OCI-LY7 (cell line): ENCODE measurements at regions of chr2 and their contacts with region 1.

Region 1: GRCh38 chr2:200703127-200703925 is 108.4 kb upstream of the BZW1 start:
- DNase-seq: peak; percentile 84
- H3K4me3 ChIP-seq: no peak overlapping the region
- H3K27ac ChIP-seq: no peak overlapping the region
- H3K4me1 ChIP-seq: peaks cover 30% of the 10 kb centered on the region
- CTCF ChIP-seq: peak; percentile 92

Region 2: GRCh38 chr2:199979832-199980628 is 723.3 kb before region 1 on chr2:
- CTCF ChIA-PET with region 1: no interaction called
- POLR2A ChIA-PET with region 1: no interaction called
- intact Hi-C with region 1: loop called (anchors 1 kb)
- DNase-seq: peak; percentile 73
- H3K4me3 ChIP-seq: no peak overlapping the region
- H3K27ac ChIP-seq: no peak overlapping the region
- H3K4me1 ChIP-seq: no peaks in the 10 kb centered on the region
- CTCF ChIP-seq: peak; percentile 95

Region 3: DNA sequence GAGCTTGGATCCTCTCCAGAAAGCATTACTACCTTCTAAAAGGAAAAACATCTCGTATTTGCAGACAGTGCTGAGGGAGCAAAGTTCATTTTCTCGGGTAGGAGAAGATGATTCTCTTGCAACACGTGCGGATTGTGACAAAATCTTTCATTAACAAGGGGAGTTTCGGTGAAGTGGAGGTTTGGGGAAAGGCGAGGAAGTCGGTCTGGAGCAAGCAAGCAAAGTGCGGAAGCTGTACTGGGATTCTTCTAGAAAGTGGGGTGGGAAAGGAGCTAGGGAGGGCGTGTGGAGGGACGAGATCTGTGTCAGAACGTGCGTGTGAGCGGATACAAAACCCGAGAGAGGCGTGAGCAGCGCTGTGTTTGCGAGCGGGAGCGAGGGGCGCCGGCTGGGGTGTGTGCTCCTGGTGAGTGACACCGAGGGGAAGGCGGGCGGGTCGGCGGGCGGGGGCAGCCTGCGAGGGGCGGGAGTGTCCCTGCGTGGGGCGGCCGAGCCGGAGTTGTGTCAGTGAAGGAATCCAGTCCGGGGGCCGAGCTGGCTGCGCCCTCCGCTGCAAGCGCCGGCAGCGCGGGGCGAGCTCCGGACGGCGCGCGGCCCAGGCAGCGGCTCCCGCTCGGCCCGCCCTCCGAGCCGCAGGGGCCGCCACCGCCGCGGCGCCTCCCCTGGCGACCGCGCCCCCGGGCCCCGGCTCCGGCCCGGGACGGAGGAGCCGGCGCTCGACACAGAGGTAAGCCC is 397.0 kb before region 1 on chr2 and contains the start of gene SPATS2L:
- CTCF ChIA-PET with region 1: no interaction called
- POLR2A ChIA-PET with region 1: no interaction called
- intact Hi-C with region 1: loop called (anchors 10 kb)
- DNase-seq: peak; percentile 34
- H3K4me3 ChIP-seq: peak within 1 kb of the TSS; percentile 70
- H3K27ac ChIP-seq: no peak within 1 kb of the TSS
- H3K4me1 ChIP-seq: peaks cover 5% of the 10 kb centered on the region
- CTCF ChIP-seq: no peak
- total RNA-seq, gene SPATS2L: 5.2 and 8.4 TPM in 2 replicates

Region 4: GRCh38 chr2:200483729-200484198 is 219.6 kb before region 1 on chr2:
- CTCF ChIA-PET with region 1: interaction called, 5 read pairs
- POLR2A ChIA-PET with region 1: interaction called, 6 read pairs
- intact Hi-C with region 1: loop called (anchors 1 kb)
- DNase-seq: peak; percentile 57
- H3K4me3 ChIP-seq: no peak overlapping the region
- H3K27ac ChIP-seq: no peak overlapping the region
- H3K4me1 ChIP-seq: no peaks in the 10 kb centered on the region
- CTCF ChIP-seq: peak; percentile 80

Region 5: GRCh38 chr2:200578778-200579177 is 124.5 kb before region 1 on chr2:
- CTCF ChIA-PET with region 1: no interaction called
- POLR2A ChIA-PET with region 1: interaction called, 3 read pairs
- intact Hi-C with region 1: loop called (anchors 1 kb)
- DNase-seq: peak; percentile 19
- H3K4me3 ChIP-seq: no peak overlapping the region
- H3K27ac ChIP-seq: no peak overlapping the region
- H3K4me1 ChIP-seq: peaks cover 3% of the 10 kb centered on the region
- CTCF ChIP-seq: peak; percentile 79

Region 6: DNA sequence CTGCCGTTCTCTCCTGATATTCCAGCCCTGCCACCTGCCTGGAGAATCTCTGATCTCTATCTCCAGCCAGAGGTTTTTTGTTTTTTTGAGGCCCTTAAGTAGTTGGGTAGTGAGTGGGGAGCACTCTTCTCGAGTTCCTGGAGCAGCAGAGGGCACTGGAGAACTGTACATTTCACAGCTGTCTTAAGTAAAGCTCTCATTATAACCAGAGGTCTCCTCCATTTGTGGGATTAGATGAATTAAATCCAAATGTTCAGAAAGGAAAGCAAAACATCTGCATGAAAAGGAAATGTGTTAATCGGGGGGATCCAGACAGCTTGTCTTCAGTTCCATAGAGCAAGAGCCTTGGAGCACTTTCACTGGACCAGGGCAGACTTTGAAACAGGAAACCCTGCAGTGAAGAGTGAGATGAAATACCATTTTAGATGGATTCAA is 84.7 kb before region 1 on chr2:
- CTCF ChIA-PET with region 1: interaction called, 3 read pairs
- POLR2A ChIA-PET with region 1: interaction called, 3 read pairs
- intact Hi-C with region 1: loop called (anchors 2 kb)
- DNase-seq: peak; percentile 45
- H3K4me3 ChIP-seq: no peak overlapping the region
- H3K27ac ChIP-seq: no peak overlapping the region
- H3K4me1 ChIP-seq: peaks cover 24% of the 10 kb centered on the region
- CTCF ChIP-seq: peak; percentile 66